Panc1 (cell line): ENCODE measurements at regions of chr7 and their contacts with region 1.

Region 1: GRCh38 chr7:55415173-55415778 is 50.1 kb downstream of the LANCL2 start:
- DNase-seq: peak; percentile 65
- ATAC-seq: peak; percentile 95
- H3K4me3 ChIP-seq: no peak overlapping the region
- H3K27ac ChIP-seq: no peak overlapping the region
- H3K4me1 ChIP-seq: peaks cover 3% of the 10 kb centered on the region
- H3K27me3 ChIP-seq: no peaks in the 10 kb centered on the region
- CTCF ChIP-seq: peak; percentile 92

Region 2: DNA sequence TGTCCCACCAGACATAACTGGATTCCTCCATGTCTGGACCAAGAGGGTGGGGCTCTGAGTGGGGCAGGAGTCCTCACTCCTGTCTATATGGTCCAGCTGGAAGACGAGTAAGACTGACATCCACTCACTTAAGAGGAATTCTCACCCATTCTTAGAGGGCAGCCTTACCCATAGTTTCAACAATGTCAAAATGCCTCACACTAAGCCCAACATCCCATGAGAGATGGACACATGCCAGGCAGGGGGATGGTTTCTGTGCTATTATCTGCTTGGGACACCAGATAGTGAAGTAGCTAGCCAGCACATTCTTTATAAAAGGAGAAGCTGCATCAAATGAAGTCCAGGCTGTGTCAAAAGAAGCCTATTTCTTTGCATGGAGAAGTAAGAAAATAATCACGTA is 54.8 kb before region 1 on chr7:
- CTCF ChIA-PET with region 1: interaction called, 10 read pairs
- POLR2A ChIA-PET with region 1: no interaction called
- in situ Hi-C with region 1: no loop called
- intact Hi-C with region 1: no loop called
- DNase-seq: no peak
- ATAC-seq: no peak
- H3K4me3 ChIP-seq: no peak overlapping the region
- H3K27ac ChIP-seq: no peak overlapping the region
- H3K4me1 ChIP-seq: peaks cover 15% of the 10 kb centered on the region
- H3K27me3 ChIP-seq: peaks cover 10% of the 10 kb centered on the region
- CTCF ChIP-seq: no peak